ENCODE measurements at regions of chr6 and their contacts with region 1.

Region 1: DNA sequence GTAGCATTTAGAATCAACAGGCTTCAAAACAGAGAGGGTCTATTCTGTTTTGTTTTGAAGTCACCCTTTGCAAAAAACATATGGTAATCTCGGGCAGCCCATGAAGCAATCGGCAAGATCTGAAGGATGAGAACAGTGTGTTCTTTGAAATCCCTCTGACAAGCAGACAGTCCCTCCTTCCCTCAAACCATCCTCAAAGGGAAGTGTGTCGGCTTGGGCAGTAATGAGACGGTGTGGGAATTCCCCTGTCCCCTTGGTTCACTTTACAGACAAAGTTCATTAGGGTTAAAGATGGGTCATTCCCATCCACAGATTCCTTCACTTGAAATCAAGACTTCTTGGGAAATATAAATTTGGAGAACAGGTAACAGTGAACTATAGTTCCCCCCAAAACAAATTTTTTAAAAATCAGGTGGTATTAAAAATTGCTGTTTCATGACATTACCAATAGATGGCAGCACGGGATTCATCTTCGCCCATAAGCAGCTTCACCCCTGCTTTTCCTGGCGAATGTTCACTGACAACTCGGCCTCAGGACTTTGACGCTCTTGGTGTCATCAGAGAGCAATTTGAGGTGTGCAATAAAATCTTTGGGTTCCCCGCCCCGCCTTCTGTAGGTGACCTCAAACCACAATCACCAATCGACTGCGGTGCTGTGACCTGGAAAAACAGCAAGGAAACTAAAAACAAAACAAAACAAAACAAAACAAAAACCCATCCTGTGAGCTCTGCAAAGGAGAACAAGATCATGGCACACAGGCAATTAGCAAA is 159.3 kb upstream of the TNFAIP3 start:
- DNase-seq: peak; percentile 68
- H3K4me3 ChIP-seq: peak overlapping the region in 1 of 3 experiments; percentile 30
- H3K27ac ChIP-seq: no peak overlapping the region
- H3K4me1 ChIP-seq: peaks cover 4% of the 10 kb centered on the region
- H3K27me3 ChIP-seq: no peaks in the 10 kb centered on the region
- CTCF ChIP-seq: peak; percentile 60 to 68
- POLR2A ChIP-seq: no peak

Region 2: GRCh38 chr6:137697267-137697938 is 10.4 kb before region 1 on chr6:
- CTCF ChIA-PET with region 1: interaction called, 10 read pairs
- POLR2A ChIA-PET with region 1: no interaction called
- dilution Hi-C with region 1: no loop called
- intact Hi-C with region 1: no loop called
- DNase-seq: peak; percentile 97
- H3K4me3 ChIP-seq: no peak overlapping the region
- H3K27ac ChIP-seq: peak overlapping the region; percentile 71
- H3K4me1 ChIP-seq: peaks cover 31% of the 10 kb centered on the region
- H3K27me3 ChIP-seq: no peaks in the 10 kb centered on the region
- CTCF ChIP-seq: peak in 1 of 2 donors; percentile 17
- POLR2A ChIP-seq: peak; percentile 24

Region 3: GRCh38 chr6:137853569-137854213 is 145.9 kb after region 1 on chr6:
- CTCF ChIA-PET with region 1: interaction called, 4 read pairs
- POLR2A ChIA-PET with region 1: no interaction called
- dilution Hi-C with region 1: no loop called
- intact Hi-C with region 1: loop called (anchors 5 kb)
- DNase-seq: peak; percentile 82
- H3K4me3 ChIP-seq: no peak overlapping the region
- H3K27ac ChIP-seq: no peak overlapping the region
- H3K4me1 ChIP-seq: peaks cover 14% of the 10 kb centered on the region
- H3K27me3 ChIP-seq: no peaks in the 10 kb centered on the region
- CTCF ChIP-seq: no peak
- POLR2A ChIP-seq: no peak

Region 4: GRCh38 chr6:137938770-137939379 is 231.1 kb after region 1 on chr6:
- CTCF ChIA-PET with region 1: interaction called, 103 read pairs
- POLR2A ChIA-PET with region 1: no interaction called
- dilution Hi-C with region 1: no loop called
- intact Hi-C with region 1: loop called (anchors 1 kb)
- DNase-seq: no peak
- H3K4me3 ChIP-seq: no peak overlapping the region
- H3K27ac ChIP-seq: no peak overlapping the region
- H3K4me1 ChIP-seq: no peaks in the 10 kb centered on the region
- H3K27me3 ChIP-seq: no peaks in the 10 kb centered on the region
- CTCF ChIP-seq: no peak
- POLR2A ChIP-seq: no peak

Region 5: DNA sequence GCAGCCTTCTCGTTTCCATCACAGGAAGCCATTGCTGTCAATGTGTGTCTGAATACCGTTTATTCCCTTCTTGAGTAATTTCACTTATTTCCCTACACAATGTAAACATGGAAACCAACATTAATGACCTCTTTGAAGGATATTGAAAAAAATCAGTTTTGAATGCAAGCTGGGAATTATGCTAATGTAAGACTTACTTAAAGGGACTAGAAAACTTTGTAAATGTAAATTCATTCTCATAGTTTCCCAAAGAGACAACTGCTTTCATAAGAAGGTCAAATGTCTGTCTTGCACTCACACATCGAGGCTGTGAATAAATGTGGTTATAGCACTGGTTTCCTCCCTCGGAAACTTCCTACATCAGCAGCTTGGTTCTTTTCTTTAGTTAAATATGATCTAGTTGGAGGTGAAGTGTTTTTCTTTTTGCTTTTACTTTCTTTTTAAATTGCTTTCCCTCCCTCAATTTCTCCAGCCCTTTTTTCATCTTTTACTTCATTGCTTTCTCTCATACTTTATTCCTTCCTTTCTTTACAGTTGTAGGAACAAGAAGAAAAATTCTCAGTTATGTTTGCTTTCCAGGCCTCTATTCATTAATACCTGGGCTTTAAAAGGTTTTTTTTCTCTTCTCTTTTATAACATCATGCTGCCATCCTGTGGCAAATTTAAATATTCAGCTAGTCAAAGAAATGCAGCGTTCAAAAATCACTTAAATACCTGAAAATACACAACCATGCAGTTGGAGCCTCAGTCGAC is 267.6 kb after region 1 on chr6:
- CTCF ChIA-PET with region 1: interaction called, 26 read pairs
- POLR2A ChIA-PET with region 1: no interaction called
- dilution Hi-C with region 1: no loop called
- intact Hi-C with region 1: loop called (anchors 1 kb)
- DNase-seq: peak; percentile 27
- H3K4me3 ChIP-seq: no peak overlapping the region
- H3K27ac ChIP-seq: no peak overlapping the region
- H3K4me1 ChIP-seq: no peaks in the 10 kb centered on the region
- H3K27me3 ChIP-seq: peaks cover 0 to under 1% of the 10 kb centered on the region in 2 experiments
- CTCF ChIP-seq: no peak
- POLR2A ChIP-seq: no peak

Region 6: DNA sequence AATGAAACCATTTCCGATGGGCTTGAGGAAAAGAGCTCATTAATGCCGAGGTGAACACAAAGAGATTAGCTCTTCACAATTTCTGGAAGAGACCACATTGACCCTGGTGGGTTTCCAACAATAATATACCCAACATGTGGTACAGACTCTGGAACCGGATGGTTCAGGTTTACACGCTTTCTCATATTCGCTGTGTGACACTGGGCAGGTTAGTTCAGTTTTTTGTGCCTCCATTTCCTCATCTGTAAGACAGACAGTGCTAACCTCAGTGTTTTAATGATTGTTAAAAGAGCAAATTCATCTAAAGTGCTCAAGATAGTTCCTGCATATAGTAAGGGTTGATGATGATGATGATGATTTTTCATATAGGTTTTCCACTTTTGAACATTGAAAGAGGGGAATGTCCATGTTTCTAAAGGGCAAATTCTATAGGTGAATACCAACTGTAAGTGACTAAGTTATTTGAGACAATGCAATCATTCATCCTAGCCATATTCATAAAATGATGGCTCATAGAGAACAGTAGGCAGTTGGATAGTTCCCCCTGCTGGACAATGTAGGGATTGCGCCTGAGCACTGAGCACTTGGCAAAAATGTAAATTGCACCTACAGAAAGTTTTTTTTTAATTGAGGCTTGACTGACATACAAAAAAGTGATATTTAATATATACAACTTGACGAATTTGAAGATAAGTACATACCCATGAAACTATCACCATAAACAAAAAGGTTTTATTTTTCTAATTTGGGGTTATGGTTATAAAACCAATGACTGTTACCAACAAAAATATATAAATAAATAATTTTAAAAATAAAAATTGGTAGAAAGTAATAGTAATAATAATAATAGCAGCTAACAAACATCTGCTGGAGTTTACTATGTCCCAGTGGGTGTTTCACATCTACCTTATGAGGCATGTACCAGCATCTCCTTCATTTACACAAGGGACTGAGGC is 401.5 kb after region 1 on chr6:
- CTCF ChIA-PET with region 1: interaction called, 4 read pairs
- POLR2A ChIA-PET with region 1: no interaction called
- dilution Hi-C with region 1: no loop called
- intact Hi-C with region 1: loop called (anchors 1 kb)
- DNase-seq: peak; percentile 91
- H3K4me3 ChIP-seq: no peak overlapping the region
- H3K27ac ChIP-seq: no peak overlapping the region
- H3K4me1 ChIP-seq: peaks cover 27% of the 10 kb centered on the region
- H3K27me3 ChIP-seq: peaks cover 1 to 6% of the 10 kb centered on the region in 2 experiments
- CTCF ChIP-seq: peak; percentile 77 to 81
- POLR2A ChIP-seq: no peak